Cardiac septum (tissue), 1 donor: ENCODE measurements at regions of chr11 and their contacts with region 1.

Region 1: DNA sequence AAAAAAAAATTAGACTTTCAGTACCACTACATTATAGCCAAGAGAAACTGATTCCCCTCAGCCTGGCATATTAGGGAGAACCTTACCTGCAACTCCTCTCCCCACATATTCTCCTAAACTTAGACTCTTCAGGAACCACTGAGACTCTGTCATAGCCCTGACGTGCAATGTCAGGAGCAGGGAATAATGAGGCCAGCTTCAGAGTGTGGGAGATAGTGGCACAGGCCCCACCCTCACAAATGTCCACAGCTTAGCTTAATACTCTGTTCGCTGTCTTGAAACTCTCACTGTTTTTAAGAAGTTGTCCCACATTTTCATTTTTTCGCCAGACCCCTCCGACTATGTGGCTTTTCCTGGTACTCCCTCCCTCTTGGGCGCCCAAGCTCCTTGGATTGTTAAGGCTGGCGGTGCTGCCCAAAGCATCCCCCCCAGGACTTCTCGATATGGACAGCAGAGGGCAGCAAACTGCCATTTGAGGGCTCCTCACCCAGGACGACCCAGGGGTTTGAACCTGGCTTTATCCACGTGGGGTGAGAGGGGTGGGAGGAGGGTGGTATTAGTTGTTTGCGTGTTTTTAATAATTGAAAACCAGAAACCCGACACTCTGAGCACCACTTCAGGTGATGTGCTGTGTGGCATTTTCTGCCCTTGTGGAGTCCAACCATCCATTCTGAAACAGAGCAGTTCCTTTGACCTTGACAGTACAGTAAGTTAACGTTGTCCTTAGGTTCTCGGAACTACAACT is 45.2 kb upstream of the RASSF10 start:
- DNase-seq: no peak

Region 2: GRCh38 chr11:12802418-12803085 is 161.4 kb before region 1 on chr11:
- intact Hi-C with region 1: no loop called
- DNase-seq: no peak

Region 3: DNA sequence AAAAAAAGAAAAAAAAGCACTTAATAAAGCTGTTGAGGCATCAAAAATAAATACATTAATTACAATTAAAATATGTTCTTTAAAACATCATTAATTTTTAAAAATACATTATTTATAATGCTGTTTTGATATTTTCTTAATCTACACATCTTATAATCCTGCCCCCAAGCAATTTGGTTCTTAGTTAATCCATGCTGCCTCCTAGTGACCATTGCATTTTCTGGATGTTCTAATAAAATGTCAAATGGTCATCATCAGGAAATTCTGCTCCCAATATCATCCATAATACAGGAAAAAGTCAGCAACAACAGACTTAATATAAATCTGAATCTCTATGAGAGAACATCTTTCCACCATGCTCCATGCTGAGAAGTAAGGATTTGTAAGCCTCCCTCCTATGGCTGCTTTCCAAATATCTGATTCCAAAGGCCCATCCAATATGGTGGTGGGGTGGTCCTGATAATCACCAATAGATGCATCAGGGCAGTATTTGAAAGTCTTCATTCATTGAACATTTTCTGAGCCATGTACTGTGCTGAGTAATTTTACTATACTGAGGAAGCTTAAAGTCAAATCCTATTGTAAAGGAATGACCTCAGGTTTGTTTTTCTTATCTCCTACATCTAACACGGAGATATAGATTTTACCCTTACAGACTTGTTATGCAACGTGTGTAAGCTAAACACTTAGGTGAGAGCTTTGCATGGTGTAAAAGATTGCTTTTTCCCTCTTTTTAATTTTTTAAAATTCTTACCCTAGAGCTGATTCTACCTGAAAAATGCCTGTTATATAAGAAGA is 189.0 kb after region 1 on chr11:
- intact Hi-C with region 1: loop called (anchors 5 kb)
- DNase-seq: no peak

Region 4: GRCh38 chr11:13183094-13183825 is 219.3 kb after region 1 on chr11:
- intact Hi-C with region 1: loop called (anchors 5 kb)
- DNase-seq: no peak

Region 5: DNA sequence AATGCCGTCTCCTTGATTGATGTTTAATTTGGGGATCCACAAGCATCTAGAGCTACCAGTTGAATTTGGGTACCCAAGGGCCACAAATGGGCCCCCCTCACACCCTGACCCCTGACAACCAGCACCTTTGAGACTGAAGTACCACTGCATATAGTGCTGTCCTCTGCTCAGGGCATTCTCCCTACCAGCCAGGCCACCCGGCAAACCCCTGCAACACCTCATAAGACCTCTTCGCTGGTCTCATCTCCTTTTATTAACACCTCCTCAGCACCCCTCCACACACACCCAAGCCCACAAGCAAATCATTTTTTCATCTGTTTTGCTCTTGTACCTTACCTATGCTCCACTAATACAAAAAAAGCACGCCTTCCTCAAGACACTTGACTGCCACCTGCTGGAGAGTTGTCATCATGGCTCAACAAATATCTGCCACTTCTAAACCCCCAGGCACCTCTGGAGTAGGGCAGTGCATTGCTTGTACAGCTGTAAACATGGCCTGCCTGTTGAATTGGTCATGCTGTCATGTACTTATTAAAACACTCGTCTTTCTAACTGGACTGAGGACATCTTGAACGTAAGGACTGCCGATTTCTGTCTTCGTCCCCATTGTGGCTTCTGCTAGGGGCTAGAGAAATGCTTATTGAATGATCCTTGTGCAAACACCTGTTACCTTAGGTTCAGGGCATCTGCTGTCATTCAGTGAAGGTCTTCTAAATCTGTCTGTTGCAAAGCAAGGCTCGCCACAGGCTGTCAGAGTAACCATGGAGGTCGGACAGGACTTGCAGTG is 380.2 kb after region 1 on chr11:
- intact Hi-C with region 1: loop called (anchors 10 kb)
- DNase-seq: no peak